ENCODE measurements at regions of chr6 and their contacts with region 1.

Region 1: DNA sequence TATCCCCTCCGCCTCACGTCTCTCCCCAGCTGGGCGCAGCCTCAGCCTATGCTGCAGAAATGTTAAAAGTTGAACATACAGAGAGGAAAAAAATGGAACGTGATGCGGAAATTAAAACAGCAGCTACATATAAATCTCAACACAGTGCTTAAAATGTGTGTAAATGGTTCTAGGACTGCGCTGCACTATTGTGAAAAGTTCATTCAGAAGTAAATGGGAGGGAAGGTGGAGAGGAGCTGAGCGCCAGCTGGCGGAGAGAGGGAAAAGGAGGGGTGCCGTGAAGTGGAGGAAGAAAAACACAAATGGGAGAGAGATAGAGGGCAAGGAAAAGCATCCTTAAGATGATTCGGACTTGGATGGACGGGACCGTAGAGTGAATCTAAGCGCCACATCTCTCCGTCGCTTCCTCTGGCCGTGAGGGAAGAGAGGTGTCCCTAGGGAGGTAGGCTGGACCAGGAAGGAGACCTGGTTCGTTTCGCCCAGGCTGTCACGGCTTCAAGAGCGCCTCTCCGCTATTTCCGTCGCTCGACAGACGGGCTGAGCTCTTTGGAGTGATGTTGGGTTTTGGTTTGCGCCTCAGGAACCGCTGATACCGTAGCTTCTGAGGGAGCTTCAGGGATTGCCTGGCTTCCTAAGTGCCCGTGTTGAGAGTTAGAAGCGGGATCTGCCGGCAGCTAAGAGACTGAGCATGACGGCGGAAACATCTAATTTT is 113.7 kb downstream of the TRIM27 start:
- H3K4me3 ChIP-seq: peak overlapping the region; percentile 60
- H3K27ac ChIP-seq: no peak overlapping the region
- H3K4me1 ChIP-seq: no peaks in the 10 kb centered on the region
- CTCF ChIP-seq: peak; percentile 95

Region 2: DNA sequence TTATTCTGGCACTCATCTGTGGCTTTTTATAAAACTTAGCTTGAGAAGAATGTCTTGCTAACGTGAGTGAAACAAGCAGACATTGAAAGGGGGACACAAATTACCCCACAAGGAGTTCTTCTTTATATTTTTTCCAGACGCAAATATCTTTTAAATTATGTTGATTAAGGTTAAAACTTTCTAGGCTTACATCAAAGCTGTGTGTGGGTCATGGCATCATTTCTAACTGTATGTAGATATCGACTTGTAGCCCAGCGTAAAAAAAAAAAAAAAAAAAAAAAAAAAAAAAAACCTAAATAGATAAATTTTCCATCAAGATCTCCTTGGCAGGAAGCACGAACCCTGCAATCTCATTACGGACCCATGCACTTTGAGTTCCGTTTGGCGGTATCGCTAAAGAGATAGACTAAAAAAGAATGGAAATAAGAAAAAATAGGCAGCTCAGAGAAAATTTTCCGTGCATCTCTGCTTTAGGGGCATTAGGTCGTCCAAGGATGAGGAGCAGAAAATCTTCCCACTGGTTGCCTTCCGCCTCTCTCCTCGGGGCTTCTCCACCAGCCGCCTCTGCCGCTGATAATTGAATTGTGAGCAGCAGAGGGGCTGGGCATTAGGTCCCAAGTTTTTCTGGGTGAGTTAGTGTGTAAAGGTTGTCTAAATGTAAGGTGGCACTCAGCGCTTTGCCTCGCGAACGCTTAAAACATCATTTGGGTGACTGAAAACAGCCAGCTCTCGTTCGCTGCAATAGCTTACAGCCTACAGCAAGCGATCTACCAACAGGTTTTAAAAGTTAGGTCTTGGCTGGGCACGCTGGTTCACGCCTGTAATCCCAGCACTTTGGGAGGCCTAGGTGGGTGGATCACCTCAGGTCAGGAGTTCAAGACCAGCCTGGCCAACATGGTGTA is 80.4 kb before region 1 on chr6:
- CTCF ChIA-PET with region 1: interaction called, 4 read pairs
- POLR2A ChIA-PET with region 1: interaction called, 12 read pairs
- H3K4me3 ChIP-seq: peak overlapping the region; percentile 88
- H3K27ac ChIP-seq: no peak overlapping the region
- H3K4me1 ChIP-seq: no peaks in the 10 kb centered on the region
- CTCF ChIP-seq: no peak

Region 3: DNA sequence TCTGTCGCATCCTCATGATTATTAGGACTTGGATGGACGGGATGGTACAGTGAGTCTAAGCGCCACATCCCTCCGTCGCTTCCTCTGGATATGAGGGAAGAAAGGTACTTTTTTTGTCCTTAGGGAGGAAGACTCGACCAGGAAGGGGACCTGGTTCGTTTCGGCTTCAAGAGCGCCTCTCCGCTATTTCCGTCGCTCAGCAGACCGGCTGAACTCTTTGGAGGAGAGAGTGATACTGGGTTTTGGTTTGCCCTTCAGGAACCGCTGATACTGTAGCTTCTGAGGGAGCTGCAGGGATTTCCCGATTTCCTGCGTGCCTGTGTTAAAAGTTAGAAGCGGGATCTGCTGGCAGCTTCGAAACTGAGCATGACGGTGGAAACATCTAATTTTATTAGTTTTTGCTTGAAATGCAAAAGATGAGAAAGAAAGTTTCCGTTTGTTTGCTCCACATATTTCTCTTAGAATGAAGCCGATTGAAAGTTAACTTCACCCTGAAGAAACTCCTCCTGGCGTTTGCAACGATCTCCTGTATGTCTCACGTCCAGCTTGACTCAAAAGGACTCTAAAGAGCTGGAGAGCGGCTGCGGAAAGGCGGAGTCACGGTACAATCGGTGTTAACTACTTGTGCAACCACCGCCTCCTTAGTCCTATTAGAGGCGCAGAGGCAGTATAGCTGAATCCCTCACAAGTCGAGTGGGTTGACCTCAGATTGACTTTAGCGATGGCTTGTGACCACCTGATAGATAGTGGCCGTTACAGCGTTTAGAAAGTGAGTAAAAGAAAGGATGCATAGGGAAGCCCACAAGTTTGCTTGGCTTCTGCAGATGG is 15.7 kb before region 1 on chr6:
- CTCF ChIA-PET with region 1: interaction called, 11 read pairs
- POLR2A ChIA-PET with region 1: interaction called, 15 read pairs
- H3K4me3 ChIP-seq: peak overlapping the region; percentile 39
- H3K27ac ChIP-seq: no peak overlapping the region
- H3K4me1 ChIP-seq: 0 out of 2 replicates have a peak, but pooled peaks cover 4% of the 10 kb centered on the region
- CTCF ChIP-seq: peak; percentile 6; the same call in 1 of the 2 replicates